Naive thymus-derived CD4-positive, alpha-beta T cell (primary cell): ENCODE measurements at regions of chr5 and their contacts with region 1.

Region 1: GRCh38 chr5:140174465-140175366 is at the start of gene CYSTM1:
- DNase-seq: peak; percentile 95 to 98 (median 97)
- ATAC-seq: peak; percentile 94
- H3K4me3 ChIP-seq: peak within 1 kb of the TSS; percentile 97
- H3K4me3 Mint-ChIP-seq: peak within 1 kb of the TSS; percentile 84 to 95 (median 91)
- H3K27ac ChIP-seq: peak within 1 kb of the TSS; percentile 89
- H3K27ac Mint-ChIP-seq: peak within 1 kb of the TSS; percentile 78 to 98 (median 95)
- H3K4me1 ChIP-seq: peaks cover 8 to 14% of the 10 kb centered on the region in 2 donors
- H3K4me1 Mint-ChIP-seq: peaks cover 7 to 20% (median 14%) of the 10 kb centered on the region in 7 donors
- H3K27me3 ChIP-seq: no peaks in the 10 kb centered on the region
- H3K27me3 Mint-ChIP-seq: peaks cover 0 to 30% (median 0%) of the 10 kb centered on the region in 5 donors
- total RNA-seq, gene CYSTM1: 1.6 to 11.1 (median 3.5) TPM

Region 2: DNA sequence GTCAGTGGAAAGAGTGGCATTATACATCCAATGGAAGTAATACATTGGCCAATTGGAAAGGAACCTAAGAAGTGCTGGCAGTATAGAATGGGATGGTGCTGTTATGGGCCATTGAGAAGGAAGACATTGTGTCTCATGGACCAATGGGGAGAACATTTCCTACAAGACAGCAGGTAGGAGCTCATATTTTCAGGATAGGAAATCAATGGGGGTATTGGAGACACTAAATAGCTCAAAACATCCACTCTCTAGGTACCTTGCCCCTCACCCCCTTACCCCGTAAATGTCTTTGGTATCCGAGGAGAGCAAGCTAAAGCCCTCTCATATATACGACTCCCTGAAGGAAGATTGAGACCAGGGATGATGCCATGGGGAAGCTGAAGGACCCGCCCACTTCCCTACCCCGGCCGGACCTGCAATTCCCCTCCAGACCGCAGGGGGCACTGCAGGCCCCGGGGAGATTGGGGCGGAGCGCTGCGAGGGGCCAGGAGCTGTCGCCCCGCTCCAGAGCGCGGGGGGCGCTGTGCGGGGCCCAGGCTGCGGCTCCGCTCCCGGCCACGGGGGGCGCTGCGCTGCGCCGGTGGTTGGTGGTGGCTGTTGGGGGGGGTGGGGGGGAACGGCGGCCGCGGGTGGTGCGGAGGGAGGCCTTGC is 1822.5 kb before region 1 on chr5 and contains the start of gene KDM3B:
- CTCF ChIA-PET with region 1: no interaction called
- POLR2A ChIA-PET with region 1: no interaction called
- intact Hi-C with region 1: loop called in 1 of 2 experiments (anchors 5 kb)
- DNase-seq: peak; percentile 82 to 100 (median 96)
- ATAC-seq: peak; percentile 96
- H3K4me3 ChIP-seq: peak within 1 kb of the TSS; percentile 93
- H3K4me3 Mint-ChIP-seq: peak within 1 kb of the TSS; percentile 88 to 98 (median 96)
- H3K27ac ChIP-seq: peak within 1 kb of the TSS; percentile 91
- H3K27ac Mint-ChIP-seq: peak within 1 kb of the TSS; percentile 90 to 98 (median 96)
- H3K4me1 ChIP-seq: peaks cover 18 to 32% of the 10 kb centered on the region in 2 donors
- H3K4me1 Mint-ChIP-seq: peaks cover 30 to 54% (median 48%) of the 10 kb centered on the region in 7 donors
- H3K27me3 ChIP-seq: no peaks in the 10 kb centered on the region
- H3K27me3 Mint-ChIP-seq: no peaks in the 10 kb centered on the region
- total RNA-seq, gene KDM3B: 67.7 to 90.2 (median 82.8) TPM

Region 3: GRCh38 chr5:139949710-139950109 is 225.0 kb before region 1 on chr5:
- CTCF ChIA-PET with region 1: no interaction called
- POLR2A ChIA-PET with region 1: no interaction called
- intact Hi-C with region 1: no loop called
- DNase-seq: no peak
- ATAC-seq: no peak
- H3K4me3 ChIP-seq: no peak overlapping the region
- H3K4me3 Mint-ChIP-seq: no peak overlapping the region
- H3K27ac ChIP-seq: no peak overlapping the region
- H3K27ac Mint-ChIP-seq: no peak overlapping the region
- H3K4me1 ChIP-seq: no peaks in the 10 kb centered on the region
- H3K4me1 Mint-ChIP-seq: peaks cover 0 to 2% (median 0%) of the 10 kb centered on the region in 7 donors
- H3K27me3 ChIP-seq: peaks cover 3 to 10% of the 10 kb centered on the region in 2 donors
- H3K27me3 Mint-ChIP-seq: peaks cover 31 to 56% (median 45%) of the 10 kb centered on the region in 5 donors

Region 4: DNA sequence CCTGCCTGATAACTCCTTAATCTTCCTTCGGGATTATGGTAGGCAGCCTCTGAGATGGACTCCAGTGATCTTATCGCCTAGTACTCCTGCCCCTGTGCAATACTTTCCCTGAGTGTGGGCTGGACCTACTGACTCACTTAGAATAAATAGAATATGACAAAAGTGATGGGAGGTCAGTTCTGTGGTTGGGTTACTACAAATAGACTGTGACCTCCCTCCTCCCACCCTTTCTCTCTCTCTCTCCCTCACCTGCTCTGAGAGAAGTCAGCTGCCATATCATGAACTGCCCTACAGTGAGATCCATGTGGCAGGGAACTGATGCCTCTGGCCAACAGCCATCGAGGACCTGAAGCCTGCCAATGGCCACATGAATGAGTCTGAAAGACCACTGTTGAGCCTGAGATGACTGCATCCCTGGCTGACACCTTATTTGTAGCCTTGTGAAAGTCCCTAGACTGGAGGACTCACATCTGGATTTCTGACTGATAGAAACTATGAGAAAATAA is 163.4 kb before region 1 on chr5:
- CTCF ChIA-PET with region 1: no interaction called
- POLR2A ChIA-PET with region 1: no interaction called
- intact Hi-C with region 1: no loop called
- DNase-seq: no peak
- ATAC-seq: no peak
- H3K4me3 ChIP-seq: no peak overlapping the region
- H3K4me3 Mint-ChIP-seq: no peak overlapping the region
- H3K27ac ChIP-seq: no peak overlapping the region
- H3K27ac Mint-ChIP-seq: no peak overlapping the region
- H3K4me1 ChIP-seq: no peaks in the 10 kb centered on the region
- H3K4me1 Mint-ChIP-seq: no peaks in the 10 kb centered on the region
- H3K27me3 ChIP-seq: peaks cover 0 to 6% of the 10 kb centered on the region in 2 donors
- H3K27me3 Mint-ChIP-seq: peaks cover 2 to 6% (median 5%) of the 10 kb centered on the region in 5 donors

Region 5: DNA sequence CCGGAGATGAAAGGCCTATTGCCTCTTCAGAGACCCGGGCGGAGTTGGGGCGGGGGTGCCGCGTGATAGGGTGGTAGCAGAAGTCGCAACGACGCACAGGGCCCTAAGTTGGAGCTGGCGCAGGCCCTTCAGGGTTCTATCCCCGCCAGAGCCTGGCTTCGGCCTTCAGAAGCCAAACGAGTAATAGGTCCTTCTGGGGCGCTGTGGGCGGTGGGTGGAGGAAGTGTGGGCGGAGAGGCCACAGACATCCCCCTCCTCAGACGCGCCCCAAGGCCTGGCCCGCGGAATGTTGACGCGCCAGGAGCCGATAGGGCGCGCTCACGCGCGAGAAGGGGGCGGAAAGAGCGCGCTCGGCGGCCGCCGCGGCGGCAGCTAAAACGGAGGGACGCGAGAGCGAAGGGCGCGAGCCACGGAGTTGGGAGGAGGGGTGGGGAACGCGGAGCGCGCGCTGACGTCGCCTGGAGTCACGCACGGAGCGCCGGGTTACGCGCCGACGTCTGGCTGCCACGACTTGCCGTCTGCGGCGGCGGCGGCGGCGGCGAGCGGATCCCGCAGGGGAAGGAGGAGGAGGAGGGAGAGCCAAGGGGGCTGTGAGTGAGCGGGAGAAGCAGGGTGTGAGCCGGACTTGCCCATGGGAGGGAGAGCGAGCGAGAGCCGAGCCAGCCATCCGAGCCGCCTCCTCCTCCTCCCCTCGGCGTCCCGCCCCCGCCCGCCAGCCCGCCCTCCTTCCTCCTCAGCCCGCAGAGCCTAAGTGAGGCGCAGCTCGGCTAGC is 67.2 kb before region 1 on chr5:
- CTCF ChIA-PET with region 1: no interaction called
- POLR2A ChIA-PET with region 1: interaction called, 9 read pairs
- intact Hi-C with region 1: loop called (anchors 1 kb)
- DNase-seq: peak; percentile 87 to 96 (median 94)
- ATAC-seq: peak; percentile 92
- H3K4me3 ChIP-seq: peak overlapping the region; percentile 80
- H3K4me3 Mint-ChIP-seq: peak overlapping the region; percentile 93 to 99 (median 97)
- H3K27ac ChIP-seq: peak overlapping the region; percentile 91
- H3K27ac Mint-ChIP-seq: peak overlapping the region; percentile 96 to 99 (median 99)
- H3K4me1 ChIP-seq: peaks cover 19 to 35% of the 10 kb centered on the region in 2 donors
- H3K4me1 Mint-ChIP-seq: peaks cover 30 to 59% (median 47%) of the 10 kb centered on the region in 7 donors
- H3K27me3 ChIP-seq: peaks cover 0 to 7% of the 10 kb centered on the region in 2 donors
- H3K27me3 Mint-ChIP-seq: peaks cover 0 to 77% (median 4%) of the 10 kb centered on the region in 5 donors

Region 6: GRCh38 chr5:140196115-140196814 is 21.5 kb after region 1 on chr5:
- CTCF ChIA-PET with region 1: no interaction called
- POLR2A ChIA-PET with region 1: no interaction called
- intact Hi-C with region 1: no loop called
- DNase-seq: no peak
- ATAC-seq: peak; percentile 40
- H3K4me3 ChIP-seq: no peak overlapping the region
- H3K4me3 Mint-ChIP-seq: no peak overlapping the region
- H3K27ac ChIP-seq: no peak overlapping the region
- H3K27ac Mint-ChIP-seq: no peak overlapping the region
- H3K4me1 ChIP-seq: no peaks in the 10 kb centered on the region
- H3K4me1 Mint-ChIP-seq: peaks cover 0 to 1% (median 0%) of the 10 kb centered on the region in 7 donors
- H3K27me3 ChIP-seq: no peaks in the 10 kb centered on the region
- H3K27me3 Mint-ChIP-seq: no peaks in the 10 kb centered on the region

Region 7: DNA sequence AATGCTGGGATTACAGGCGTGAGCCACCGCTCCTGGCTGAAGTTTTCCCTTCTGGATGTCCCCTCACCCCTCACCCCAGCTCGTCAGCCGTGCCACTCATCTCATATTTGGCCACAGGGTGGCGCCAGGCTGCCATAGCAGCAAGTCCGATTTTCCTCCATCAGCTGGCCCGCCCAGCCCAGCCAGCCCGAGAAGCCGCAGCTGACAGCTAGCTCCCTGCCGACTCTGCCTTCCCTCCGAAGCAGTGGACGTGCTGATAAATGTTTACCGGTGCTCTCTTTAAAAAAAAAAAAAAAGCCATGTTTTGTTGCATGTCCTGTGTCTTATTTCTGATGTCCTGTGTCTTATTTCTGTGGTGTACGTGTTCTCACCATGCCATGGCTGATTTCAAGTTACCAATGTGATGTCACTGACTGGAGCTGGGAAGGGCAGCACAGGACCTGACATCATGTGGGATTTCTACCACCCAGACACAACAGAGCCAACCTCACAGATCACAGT is 69.9 kb after region 1 on chr5:
- CTCF ChIA-PET with region 1: no interaction called
- POLR2A ChIA-PET with region 1: no interaction called
- intact Hi-C with region 1: loop called in 1 of 2 experiments (anchors 2 kb)
- DNase-seq: peak; percentile 62 to 82 (median 74)
- ATAC-seq: peak; percentile 87
- H3K4me3 ChIP-seq: no peak overlapping the region
- H3K4me3 Mint-ChIP-seq: peak overlapping the region in 6 of 10 donors; percentile 0 to 55 (median 44)
- H3K27ac ChIP-seq: no peak overlapping the region
- H3K27ac Mint-ChIP-seq: peak overlapping the region in 8 of 9 donors; percentile 41 to 94 (median 77)
- H3K4me1 ChIP-seq: peaks cover 0 to 14% of the 10 kb centered on the region in 2 donors
- H3K4me1 Mint-ChIP-seq: peaks cover 5 to 43% (median 27%) of the 10 kb centered on the region in 7 donors
- H3K27me3 ChIP-seq: no peaks in the 10 kb centered on the region
- H3K27me3 Mint-ChIP-seq: no peaks in the 10 kb centered on the region

Region 8: DNA sequence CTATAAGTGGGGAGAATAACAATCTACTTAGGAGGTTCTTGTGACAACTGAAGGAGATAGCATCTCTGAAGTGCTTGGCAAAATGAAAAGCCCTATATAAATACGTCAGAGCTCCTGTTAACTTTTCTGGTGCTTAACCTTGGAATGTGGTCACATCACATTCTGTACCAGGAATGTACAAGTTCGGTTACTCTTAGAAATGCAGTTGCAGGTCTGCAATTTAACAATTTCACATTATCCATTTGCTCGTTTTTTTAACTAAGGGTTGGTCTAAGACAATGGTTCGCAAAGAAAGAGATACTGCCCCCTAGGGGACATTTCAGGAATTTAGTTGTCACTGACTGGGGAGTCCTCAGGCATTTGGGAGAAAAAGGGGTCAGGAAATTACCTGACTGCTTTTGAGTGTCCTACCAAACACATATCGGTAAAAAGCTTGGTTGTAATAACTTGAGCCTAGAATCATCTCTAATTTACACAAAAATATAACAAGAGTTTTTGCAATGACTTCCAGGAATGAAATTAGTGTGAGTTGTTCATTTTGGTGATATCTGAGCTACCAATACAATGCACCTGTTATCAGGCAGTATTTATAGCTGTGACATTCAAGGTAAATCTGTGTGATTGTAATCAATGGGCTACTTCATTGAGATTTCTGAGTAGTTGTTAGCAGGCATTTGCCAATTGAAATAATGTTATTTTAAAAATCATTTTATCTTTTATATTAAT is 177.1 kb after region 1 on chr5:
- CTCF ChIA-PET with region 1: no interaction called
- POLR2A ChIA-PET with region 1: no interaction called
- intact Hi-C with region 1: loop called (anchors 2 to 5 kb)
- DNase-seq: peak in 8 of 9 donors; percentile 52 to 86 (median 78)
- ATAC-seq: peak; percentile 91
- H3K4me3 ChIP-seq: no peak overlapping the region
- H3K4me3 Mint-ChIP-seq: peak overlapping the region in 5 of 10 donors; percentile 8 to 54 (median 29)
- H3K27ac ChIP-seq: no peak overlapping the region
- H3K27ac Mint-ChIP-seq: peak overlapping the region in 4 of 9 donors; percentile 0 to 41 (median 18)
- H3K4me1 ChIP-seq: peaks cover 0 to 12% of the 10 kb centered on the region in 2 donors
- H3K4me1 Mint-ChIP-seq: peaks cover 4 to 39% (median 14%) of the 10 kb centered on the region in 7 donors
- H3K27me3 ChIP-seq: no peaks in the 10 kb centered on the region
- H3K27me3 Mint-ChIP-seq: peaks cover 0 to 13% (median 5%) of the 10 kb centered on the region in 5 donors

Region 9: GRCh38 chr5:140564196-140565023 is 389.7 kb after region 1 on chr5 and contains the starts of genes APBB3 and SLC35A4:
- CTCF ChIA-PET with region 1: no interaction called
- POLR2A ChIA-PET with region 1: no interaction called
- intact Hi-C with region 1: loop called in 1 of 2 experiments (anchors 1 kb)
- DNase-seq: peak; percentile 89 to 99 (median 98)
- ATAC-seq: peak; percentile 92
- H3K4me3 ChIP-seq: peak within 1 kb of the TSS; percentile 91
- H3K4me3 Mint-ChIP-seq: peak within 1 kb of the TSS; percentile 91 to 96 (median 94)
- H3K27ac ChIP-seq: peak within 1 kb of the TSS; percentile 94
- H3K27ac Mint-ChIP-seq: peak within 1 kb of the TSS; percentile 92 to 99 (median 96)
- H3K4me1 ChIP-seq: peaks cover 21 to 25% of the 10 kb centered on the region in 2 donors
- H3K4me1 Mint-ChIP-seq: peaks cover 27 to 75% (median 62%) of the 10 kb centered on the region in 7 donors
- H3K27me3 ChIP-seq: no peaks in the 10 kb centered on the region
- H3K27me3 Mint-ChIP-seq: no peaks in the 10 kb centered on the region
- total RNA-seq, gene APBB3: 37.9 to 77.8 (median 72.4) TPM
- total RNA-seq, gene SLC35A4: 40.4 to 90.1 (median 52.4) TPM

Region 10: GRCh38 chr5:140710899-140711552 is 536.3 kb after region 1 on chr5:
- CTCF ChIA-PET with region 1: no interaction called
- POLR2A ChIA-PET with region 1: no interaction called
- intact Hi-C with region 1: loop called (anchors 1 to 5 kb)
- DNase-seq: peak; percentile 57 to 94 (median 87)
- ATAC-seq: peak; percentile 89
- H3K4me3 ChIP-seq: peak overlapping the region; percentile 96
- H3K4me3 Mint-ChIP-seq: peak overlapping the region; percentile 95 to 100 (median 99)
- H3K27ac ChIP-seq: peak overlapping the region; percentile 72
- H3K27ac Mint-ChIP-seq: peak overlapping the region; percentile 98 to 100 (median 99)
- H3K4me1 ChIP-seq: peaks cover 0 to 5% of the 10 kb centered on the region in 2 donors
- H3K4me1 Mint-ChIP-seq: peaks cover 6 to 35% (median 25%) of the 10 kb centered on the region in 7 donors
- H3K27me3 ChIP-seq: no peaks in the 10 kb centered on the region
- H3K27me3 Mint-ChIP-seq: peaks cover 0 to 11% (median 0%) of the 10 kb centered on the region in 5 donors